ENCODE measurements at regions of chr15 and their contacts with region 1.

Region 1: DNA sequence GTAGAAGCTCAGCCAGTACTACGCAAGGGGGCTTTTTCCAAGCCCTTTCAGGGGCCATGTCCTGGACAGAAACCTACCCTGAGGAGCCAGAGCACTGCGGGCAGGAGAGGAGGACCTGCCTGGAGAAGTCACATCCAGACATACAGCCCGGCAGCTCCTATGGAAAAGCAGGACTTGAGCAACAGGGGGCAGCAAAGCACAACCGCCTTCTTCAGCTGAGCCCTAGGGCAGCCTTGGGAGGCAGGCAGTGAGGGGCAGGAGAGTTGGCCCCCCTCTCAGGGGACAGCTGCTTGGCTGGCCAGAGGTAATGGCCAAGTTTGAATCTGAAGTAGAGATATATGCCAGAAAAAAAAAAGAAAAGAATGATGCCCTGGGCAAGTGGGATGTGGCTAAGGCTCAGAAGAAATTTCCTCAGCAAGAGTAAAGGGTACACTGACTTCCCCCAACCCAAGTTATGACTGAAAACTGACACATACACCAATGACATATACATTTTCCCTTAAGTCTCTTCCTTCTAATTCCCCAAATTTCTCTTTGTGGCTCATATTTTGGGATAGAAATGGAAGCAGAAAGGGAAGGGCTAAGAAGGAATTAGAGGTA is 56.9 kb downstream of the CYP19A1 start:
- DNase-seq: peak; percentile 69
- CTCF ChIP-seq: peak; percentile 82

Region 2: DNA sequence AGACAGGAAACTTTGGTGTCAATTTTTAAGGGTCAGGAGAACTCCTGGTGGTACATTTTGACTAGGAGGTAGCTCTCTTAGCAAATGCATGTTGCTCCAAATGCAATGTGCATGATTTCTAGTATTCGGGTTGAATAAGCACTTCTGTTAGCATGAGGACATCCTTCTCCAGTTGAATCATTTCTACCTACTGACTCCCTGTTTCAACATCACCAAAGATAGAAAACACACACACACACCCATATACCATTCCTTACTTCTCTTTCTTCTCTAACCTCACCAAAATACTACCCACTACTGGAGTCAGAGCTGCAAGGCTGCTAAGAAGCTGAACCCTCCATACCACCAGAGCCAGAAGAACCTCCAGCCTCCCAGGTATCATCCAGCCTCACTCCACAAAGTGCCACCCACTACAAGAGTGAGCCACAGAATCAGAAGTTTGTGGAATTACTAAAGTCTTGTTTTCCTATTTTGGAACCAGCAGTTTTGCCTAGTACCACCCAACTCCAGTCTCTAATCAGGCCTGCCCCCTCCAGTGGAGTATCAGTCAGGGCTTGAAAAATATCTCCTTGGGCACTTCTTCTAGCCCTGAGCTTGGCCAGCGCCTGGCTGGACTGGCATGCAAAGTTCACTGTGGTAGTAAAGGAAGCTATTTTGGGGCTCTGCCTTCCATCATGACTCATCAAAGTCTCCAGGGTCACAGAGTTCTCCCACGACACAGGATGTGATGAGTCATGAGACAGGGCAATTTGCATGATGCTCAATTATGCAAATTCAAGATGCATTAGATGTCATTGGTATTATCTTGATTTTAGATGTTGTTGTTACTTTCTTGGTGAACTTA is 53.3 kb before region 1 on chr15:
- CTCF ChIA-PET with region 1: interaction called, 18 read pairs
- POLR2A ChIA-PET with region 1: no interaction called
- DNase-seq: peak; percentile 72
- CTCF ChIP-seq: no peak

Region 3: GRCh38 chr15:51239748-51240465 is 41.6 kb before region 1 on chr15:
- CTCF ChIA-PET with region 1: interaction called, 10 read pairs
- POLR2A ChIA-PET with region 1: no interaction called
- DNase-seq: no peak
- CTCF ChIP-seq: no peak

Region 4: DNA sequence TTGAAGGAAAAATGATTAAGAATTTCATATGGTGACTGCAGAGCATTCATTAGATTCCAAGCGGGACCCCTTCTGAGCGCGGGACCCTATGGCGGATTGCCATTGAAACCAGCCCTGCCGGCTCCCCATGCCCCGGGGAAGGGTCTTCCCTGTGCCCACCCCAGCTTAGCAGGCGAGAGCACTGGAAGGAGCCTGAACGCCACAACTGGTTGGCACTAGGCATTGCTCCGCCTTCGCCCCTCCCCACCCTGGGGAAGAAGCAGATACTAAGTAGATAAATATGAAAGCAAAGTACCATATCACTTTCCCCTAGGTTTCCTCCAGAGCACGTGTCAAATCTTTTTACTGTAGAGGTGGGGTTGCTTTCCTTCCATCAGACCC is 13.8 kb before region 1 on chr15:
- CTCF ChIA-PET with region 1: interaction called, 22 read pairs
- POLR2A ChIA-PET with region 1: no interaction called
- DNase-seq: no peak
- CTCF ChIP-seq: no peak

Region 5: GRCh38 chr15:51299187-51300066 is 18.0 kb after region 1 on chr15:
- CTCF ChIA-PET with region 1: interaction called, 20 read pairs
- POLR2A ChIA-PET with region 1: no interaction called
- DNase-seq: no peak
- CTCF ChIP-seq: no peak

Region 6: GRCh38 chr15:51350723-51351122 is 69.3 kb after region 1 on chr15:
- CTCF ChIA-PET with region 1: interaction called, 10 read pairs
- POLR2A ChIA-PET with region 1: no interaction called
- DNase-seq: no peak
- CTCF ChIP-seq: no peak

Region 7: DNA sequence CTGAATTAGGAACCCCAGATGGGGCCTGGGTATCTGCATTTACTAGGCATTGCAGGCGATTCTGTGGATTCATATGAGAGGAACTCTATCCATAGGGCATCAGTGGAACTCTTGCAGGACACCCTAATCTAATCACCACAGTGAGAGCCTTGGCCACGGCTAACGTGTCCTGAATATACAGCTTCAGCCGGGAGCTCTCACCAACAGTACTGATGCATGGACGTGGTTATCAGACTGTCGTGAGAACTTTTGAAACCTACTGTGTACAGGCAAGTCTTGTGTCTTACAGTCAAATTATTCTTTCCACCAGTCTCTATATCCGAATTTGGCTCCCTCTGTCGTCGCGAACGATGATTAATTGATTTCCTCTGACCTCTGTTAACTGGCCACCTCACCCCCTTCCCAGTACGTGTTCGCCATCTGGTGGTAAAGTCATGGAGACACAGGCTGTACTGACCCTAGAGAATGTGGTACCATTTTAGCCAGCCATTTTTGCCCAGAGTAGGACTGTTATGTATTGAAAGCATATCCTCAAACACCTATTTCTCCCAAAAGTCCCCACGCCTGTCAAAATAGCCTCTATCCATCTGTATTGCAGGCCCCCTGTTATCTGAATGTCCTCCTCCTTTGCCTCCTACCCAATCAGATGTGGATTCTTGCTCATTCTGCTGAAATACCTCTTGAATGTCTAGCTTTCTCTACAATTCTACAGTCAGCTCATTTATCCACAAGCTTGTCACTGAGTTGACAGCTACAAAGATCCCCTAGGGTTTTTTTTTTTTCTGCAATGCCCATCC is 99.7 kb after region 1 on chr15:
- CTCF ChIA-PET with region 1: interaction called, 176 read pairs
- POLR2A ChIA-PET with region 1: no interaction called
- DNase-seq: peak; percentile 77
- CTCF ChIP-seq: peak; percentile 89

Measured in GM10248 (cell line).